B cell (primary cell): ENCODE measurements at regions of chr14 and their contacts with region 1.

Region 1: DNA sequence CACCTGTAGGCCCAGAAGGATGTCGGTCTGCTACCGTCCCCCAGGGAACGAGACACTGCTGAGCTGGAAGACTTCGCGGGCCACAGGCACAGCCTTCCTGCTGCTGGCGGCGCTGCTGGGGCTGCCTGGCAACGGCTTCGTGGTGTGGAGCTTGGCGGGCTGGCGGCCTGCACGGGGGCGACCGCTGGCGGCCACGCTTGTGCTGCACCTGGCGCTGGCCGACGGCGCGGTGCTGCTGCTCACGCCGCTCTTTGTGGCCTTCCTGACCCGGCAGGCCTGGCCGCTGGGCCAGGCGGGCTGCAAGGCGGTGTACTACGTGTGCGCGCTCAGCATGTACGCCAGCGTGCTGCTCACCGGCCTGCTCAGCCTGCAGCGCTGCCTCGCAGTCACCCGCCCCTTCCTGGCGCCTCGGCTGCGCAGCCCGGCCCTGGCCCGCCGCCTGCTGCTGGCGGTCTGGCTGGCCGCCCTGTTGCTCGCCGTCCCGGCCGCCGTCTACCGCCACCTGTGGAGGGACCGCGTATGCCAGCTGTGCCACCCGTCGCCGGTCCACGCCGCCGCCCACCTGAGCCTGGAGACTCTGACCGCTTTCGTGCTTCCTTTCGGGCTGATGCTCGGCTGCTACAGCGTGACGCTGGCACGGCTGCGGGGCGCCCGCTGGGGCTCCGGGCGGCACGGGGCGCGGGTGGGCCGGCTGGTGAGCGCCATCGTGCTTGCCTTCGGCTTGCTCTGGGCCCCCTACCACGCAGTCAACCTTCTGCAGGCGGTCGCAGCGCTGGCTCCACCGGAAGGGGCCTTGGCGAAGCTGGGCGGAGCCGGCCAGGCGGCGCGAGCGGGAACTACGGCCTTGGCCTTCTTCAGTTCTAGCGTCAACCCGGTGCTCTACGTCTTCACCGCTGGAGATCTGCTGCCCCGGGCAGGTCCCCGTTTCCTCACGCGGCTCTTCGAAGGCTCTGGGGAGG is at the start of gene LTB4R:
- DNase-seq: peak; percentile 90
- ATAC-seq: peak; percentile 76
- H3K4me3 ChIP-seq: peak within 1 kb of the TSS; percentile 8 to 71 (median 57)
- H3K4me3 Mint-ChIP-seq: peak within 1 kb of the TSS; percentile 84
- H3K27ac ChIP-seq: peak within 1 kb of the TSS; percentile 65 to 83
- H3K27ac Mint-ChIP-seq: peak within 1 kb of the TSS; percentile 91
- H3K4me1 ChIP-seq: peaks cover 38 to 57% of the 10 kb centered on the region in 2 donors
- H3K4me1 Mint-ChIP-seq: peaks cover 61% of the 10 kb centered on the region
- H3K27me3 ChIP-seq: no peaks in the 10 kb centered on the region
- H3K27me3 Mint-ChIP-seq: no peaks in the 10 kb centered on the region
- CTCF ChIP-seq: peak; percentile 67
- total RNA-seq, gene LTB4R: 8.8 and 9.2 TPM in 2 replicates

Region 2: DNA sequence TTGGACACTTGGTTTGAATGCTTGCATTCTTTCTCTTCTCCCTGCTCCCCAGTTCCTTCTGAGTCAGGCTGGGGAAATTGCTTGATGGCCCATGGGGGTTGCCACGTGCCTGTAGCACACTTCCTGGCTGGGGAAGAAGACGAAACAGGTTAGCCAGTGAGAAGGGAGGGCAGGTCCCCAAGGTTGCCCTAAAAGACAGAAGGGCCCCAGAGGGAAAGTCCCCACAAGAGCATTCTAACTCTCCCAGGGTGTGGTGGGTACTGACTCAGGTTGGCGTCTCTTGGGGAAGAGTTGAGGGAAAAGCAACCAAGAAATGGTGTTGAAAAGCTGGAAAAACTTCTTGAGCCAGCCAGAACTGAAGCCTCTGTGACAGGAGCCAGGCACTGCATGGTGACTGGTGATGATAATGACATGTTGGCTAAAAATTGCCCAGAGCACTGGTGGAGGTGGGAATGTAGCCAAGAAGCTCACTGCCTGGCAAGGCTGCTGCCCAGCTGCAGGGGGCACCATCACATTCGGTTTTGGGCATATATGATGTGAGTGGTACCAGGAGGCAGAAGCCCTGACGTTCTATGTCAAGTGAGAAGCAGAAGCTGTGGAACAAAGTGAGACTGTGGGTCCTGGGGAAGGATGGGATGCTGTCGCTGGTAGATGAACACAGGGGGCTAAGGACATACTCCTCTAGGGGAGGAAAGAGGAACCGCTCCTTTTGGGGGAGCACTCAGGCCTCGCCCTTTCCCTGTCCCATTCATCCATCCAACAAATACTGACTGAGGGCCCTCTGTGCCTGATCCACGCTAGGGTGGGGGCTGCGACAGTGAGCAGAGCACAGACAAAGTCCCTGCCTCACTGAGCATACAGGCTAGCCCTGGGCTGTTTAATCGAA is 31.4 kb before region 1 on chr14:
- CTCF ChIA-PET with region 1: interaction called, 21 read pairs
- POLR2A ChIA-PET with region 1: no interaction called
- intact Hi-C with region 1: no loop called
- DNase-seq: peak; percentile 87
- ATAC-seq: peak; percentile 90
- H3K4me3 ChIP-seq: peak overlapping the region in 1 of 5 experiments; percentile 10
- H3K4me3 Mint-ChIP-seq: peak overlapping the region; percentile 75
- H3K27ac ChIP-seq: peak overlapping the region; percentile 65 to 80
- H3K27ac Mint-ChIP-seq: peak overlapping the region; percentile 93
- H3K4me1 ChIP-seq: peaks cover 38 to 60% of the 10 kb centered on the region in 2 donors
- H3K4me1 Mint-ChIP-seq: peaks cover 66% of the 10 kb centered on the region
- H3K27me3 ChIP-seq: no peaks in the 10 kb centered on the region
- H3K27me3 Mint-ChIP-seq: no peaks in the 10 kb centered on the region
- CTCF ChIP-seq: peak; percentile 53

Region 3: GRCh38 chr14:24289649-24290249 is 21.2 kb before region 1 on chr14:
- CTCF ChIA-PET with region 1: interaction called, 116 read pairs
- POLR2A ChIA-PET with region 1: interaction called, 3 read pairs
- intact Hi-C with region 1: no loop called
- DNase-seq: peak; percentile 56
- ATAC-seq: peak; percentile 87
- H3K4me3 ChIP-seq: no peak overlapping the region
- H3K4me3 Mint-ChIP-seq: peak overlapping the region; percentile 34
- H3K27ac ChIP-seq: no peak overlapping the region
- H3K27ac Mint-ChIP-seq: peak overlapping the region; percentile 41
- H3K4me1 ChIP-seq: peaks cover 10 to 18% of the 10 kb centered on the region in 2 donors
- H3K4me1 Mint-ChIP-seq: peaks cover 12% of the 10 kb centered on the region
- H3K27me3 ChIP-seq: no peaks in the 10 kb centered on the region
- H3K27me3 Mint-ChIP-seq: no peaks in the 10 kb centered on the region
- CTCF ChIP-seq: no peak

Region 4: DNA sequence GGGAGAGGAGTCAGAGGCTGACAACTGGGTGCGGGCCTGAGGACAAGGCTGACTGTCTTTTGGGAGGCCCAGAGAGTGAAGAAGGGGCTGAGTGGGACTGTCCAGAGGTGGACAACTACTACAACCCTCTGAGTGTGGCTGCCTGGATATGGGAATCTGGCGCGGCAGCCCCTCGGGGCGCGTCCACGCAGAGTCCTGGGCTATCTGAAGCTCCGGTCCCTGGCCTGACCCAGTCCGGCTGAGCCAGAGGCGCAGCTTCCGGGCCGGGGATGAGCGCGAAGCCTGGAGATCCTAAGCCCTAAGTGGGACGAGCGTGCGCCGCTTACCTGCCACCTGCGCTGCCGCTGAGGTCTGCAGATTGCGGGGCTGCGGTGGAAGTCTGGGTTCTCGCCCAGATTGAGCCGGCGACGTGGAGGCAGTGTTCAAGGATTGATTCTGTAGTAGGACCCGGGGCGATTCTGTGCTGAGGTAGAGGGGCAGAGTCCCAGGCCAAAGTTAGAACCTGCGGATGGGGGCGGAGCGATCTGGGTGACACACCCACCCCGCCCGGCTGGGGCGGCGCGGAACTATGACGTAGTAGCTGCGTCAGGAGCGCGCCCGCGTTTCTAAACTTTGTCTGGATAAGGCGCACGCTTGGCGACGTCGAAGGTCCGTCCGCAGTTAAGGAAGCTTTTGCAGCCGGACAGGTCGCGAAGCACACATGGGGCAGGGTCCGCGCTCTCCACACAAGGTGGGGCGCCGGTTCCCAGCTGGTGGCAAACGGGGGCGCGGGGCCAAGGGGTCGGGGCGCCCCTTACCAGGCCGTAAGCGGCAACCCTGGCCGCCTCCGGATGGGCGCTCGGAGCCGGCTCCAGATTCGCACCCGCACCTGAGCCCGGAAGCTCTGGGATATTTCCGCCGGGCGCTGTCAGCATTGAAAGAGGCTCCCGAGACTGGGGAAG is 11.4 kb before region 1 on chr14 and contains the starts of genes DHRS1 and NOP9:
- CTCF ChIA-PET with region 1: interaction called, 116 read pairs
- POLR2A ChIA-PET with region 1: interaction called, 7 read pairs
- intact Hi-C with region 1: loop called (anchors 1 kb)
- DNase-seq: peak; percentile 95
- ATAC-seq: peak; percentile 86
- H3K4me3 ChIP-seq: peak within 1 kb of the TSS; percentile 58 to 93 (median 77)
- H3K4me3 Mint-ChIP-seq: peak within 1 kb of the TSS; percentile 96
- H3K27ac ChIP-seq: peak within 1 kb of the TSS; percentile 79 to 83
- H3K27ac Mint-ChIP-seq: peak within 1 kb of the TSS; percentile 98
- H3K4me1 ChIP-seq: peaks cover 30 to 41% of the 10 kb centered on the region in 2 donors
- H3K4me1 Mint-ChIP-seq: peaks cover 48% of the 10 kb centered on the region
- H3K27me3 ChIP-seq: no peaks in the 10 kb centered on the region
- H3K27me3 Mint-ChIP-seq: no peaks in the 10 kb centered on the region
- CTCF ChIP-seq: no peak
- total RNA-seq, gene DHRS1: 42.7 and 43.7 TPM in 2 replicates
- total RNA-seq, gene NOP9: 22.6 and 24.5 TPM in 2 replicates

Region 5: DNA sequence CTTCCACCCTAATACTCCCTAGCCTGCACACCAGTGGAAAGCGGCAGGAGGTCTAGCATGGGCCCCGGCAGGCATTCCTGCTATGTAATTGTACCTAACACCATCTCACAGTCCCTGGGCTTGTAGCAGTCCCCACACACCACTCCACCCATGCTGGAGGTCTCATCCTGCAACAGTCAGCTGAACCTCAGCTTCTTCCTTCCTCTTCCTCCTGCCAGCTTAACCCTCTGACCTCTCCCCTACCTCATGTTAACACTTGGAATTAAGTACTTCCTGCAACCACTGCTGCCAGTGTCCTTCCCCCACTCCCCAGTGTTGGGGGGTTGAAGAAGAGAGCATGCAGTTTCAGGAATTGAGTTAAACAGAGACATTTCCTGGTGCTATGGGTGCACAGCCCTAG is 16.4 kb after region 1 on chr14:
- CTCF ChIA-PET with region 1: interaction called, 80 read pairs
- POLR2A ChIA-PET with region 1: interaction called, 7 read pairs
- intact Hi-C with region 1: loop called (anchors 1 kb)
- DNase-seq: no peak
- ATAC-seq: no peak
- H3K4me3 ChIP-seq: no peak overlapping the region
- H3K4me3 Mint-ChIP-seq: no peak overlapping the region
- H3K27ac ChIP-seq: no peak overlapping the region
- H3K27ac Mint-ChIP-seq: no peak overlapping the region
- H3K4me1 ChIP-seq: peaks cover 12 to 17% of the 10 kb centered on the region in 2 donors
- H3K4me1 Mint-ChIP-seq: peaks cover 22% of the 10 kb centered on the region
- H3K27me3 ChIP-seq: peaks cover 0 to 6% (median under 1%) of the 10 kb centered on the region in 4 experiments
- H3K27me3 Mint-ChIP-seq: peaks cover 1% of the 10 kb centered on the region
- CTCF ChIP-seq: no peak